Activated CD8-positive, alpha-beta memory T cell treated with anti-CD3 and anti-CD28 coated beads, Interleukin-2, amount 10 ng/mL, durations not matched to agents 7 days and 5 days (primary cell): ENCODE measurements at regions of chr17 and their contacts with region 1.

Region 1: DNA sequence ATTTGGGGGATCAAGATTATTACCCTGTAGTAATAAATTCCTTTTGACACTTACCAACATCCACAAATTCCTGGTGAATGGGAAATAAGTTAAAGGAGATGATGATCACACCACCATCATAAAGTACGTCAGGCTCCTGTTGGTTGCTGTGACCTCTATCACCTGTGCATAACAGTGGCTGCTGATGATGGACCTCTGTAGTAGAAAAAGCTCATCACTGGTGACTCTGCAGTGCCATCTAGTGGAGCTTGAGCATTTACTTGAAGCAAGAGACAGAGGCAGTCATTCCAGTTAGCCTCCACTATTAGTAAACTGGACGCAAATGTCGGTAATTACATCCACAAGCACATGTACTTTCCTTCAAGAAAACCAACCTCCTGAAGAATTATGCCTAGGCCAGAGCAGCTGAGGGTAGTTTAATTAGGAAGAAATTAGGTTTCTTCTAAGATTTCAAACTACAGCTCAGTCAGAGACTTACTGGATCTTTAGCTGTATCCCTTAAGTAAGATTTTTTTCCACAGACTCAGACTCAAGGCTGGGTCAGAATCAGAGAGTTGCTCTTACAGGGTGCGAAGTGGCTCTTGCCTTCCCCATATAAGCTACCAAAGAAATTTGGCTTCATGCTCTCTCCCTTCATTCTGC is 39.3 kb downstream of the CYB561 start:
- DNase-seq: peak; percentile 84
- ATAC-seq: peak; percentile 89
- H3K4me3 Mint-ChIP-seq: no peak overlapping the region
- H3K27ac Mint-ChIP-seq: no peak overlapping the region
- H3K4me1 Mint-ChIP-seq: peaks cover 5% of the 10 kb centered on the region
- H3K27me3 Mint-ChIP-seq: no peaks in the 10 kb centered on the region

Region 2: GRCh38 chr17:62995377-62995885 is 411.4 kb before region 1 on chr17:
- CTCF ChIA-PET with region 1: interaction called, 35 read pairs
- DNase-seq: peak; percentile 53
- ATAC-seq: peak; percentile 64
- H3K4me3 Mint-ChIP-seq: no peak overlapping the region
- H3K27ac Mint-ChIP-seq: no peak overlapping the region
- H3K4me1 Mint-ChIP-seq: peaks cover 9% of the 10 kb centered on the region
- H3K27me3 Mint-ChIP-seq: no peaks in the 10 kb centered on the region

Region 3: DNA sequence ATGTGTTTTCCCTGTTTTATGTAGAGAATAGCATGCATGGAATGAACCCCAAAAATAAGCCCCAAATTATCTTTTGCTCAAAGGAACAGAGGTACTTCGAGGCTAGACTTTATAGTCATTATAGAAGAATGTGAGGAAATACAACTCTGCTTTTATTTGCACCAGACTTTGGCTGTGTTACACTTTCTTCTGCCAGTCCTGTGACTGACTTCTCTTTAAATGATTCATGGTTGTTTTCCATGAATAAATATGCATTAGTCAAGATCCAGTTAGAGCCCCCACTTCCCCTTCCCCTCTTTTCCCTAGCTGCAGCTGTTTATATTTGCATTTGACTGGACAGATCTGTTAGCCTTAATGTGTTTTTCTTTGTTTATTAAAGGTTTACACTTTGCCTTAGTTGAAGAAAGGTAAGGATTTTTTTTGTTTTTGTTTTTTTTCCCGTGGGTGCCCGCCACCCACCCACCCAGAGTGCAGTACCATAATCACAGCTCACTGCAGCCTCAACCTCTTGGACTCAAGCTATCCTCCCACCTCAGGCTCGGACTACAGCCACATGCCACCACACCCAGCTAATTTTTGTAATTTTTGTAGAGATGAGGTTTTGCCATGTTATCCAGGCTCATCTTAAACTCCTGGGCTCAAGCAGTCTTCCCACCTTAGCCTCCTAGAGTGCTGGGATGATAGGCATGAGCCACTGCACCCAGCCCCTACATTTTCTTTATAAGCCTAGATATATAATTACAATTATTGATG is 113.3 kb before region 1 on chr17:
- CTCF ChIA-PET with region 1: no interaction called
- DNase-seq: no peak
- ATAC-seq: no peak
- H3K4me3 Mint-ChIP-seq: no peak overlapping the region
- H3K27ac Mint-ChIP-seq: no peak overlapping the region
- H3K4me1 Mint-ChIP-seq: peaks cover 4% of the 10 kb centered on the region
- H3K27me3 Mint-ChIP-seq: no peaks in the 10 kb centered on the region

Region 4: DNA sequence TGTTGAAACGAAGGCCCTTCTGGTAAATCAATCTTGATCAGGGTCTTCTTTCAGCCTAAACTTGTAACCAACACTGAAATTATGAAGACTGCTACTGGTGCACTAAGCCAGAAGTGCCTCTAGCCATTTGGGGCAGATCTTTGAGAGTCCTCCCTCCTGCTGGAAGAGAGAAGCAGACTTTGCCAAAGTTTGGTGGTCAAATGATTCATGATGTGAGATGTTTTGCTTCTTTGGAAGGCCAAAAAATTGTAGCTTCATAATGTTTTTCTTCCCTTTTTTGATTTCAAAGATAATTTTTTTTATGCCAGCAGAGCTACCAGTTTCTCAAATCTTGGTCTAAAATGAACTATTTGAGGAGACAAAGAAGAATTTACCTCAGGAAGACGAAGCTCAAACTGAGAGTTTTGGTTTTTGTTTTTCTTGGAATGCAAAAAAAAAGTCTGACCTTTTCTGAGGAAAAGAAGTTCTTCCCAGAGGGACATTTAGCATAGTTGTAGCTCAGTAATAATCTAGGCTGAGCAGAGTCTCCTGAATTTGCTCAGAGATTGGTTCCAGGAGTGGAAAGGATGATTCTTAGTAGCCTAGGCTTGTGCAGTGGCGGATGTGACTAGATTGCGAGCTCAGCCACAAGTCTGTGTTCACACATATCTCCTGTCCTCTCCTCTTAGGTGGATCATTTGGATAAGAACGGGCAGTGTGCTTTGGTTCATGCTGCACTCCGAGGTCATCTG is 11.6 kb before region 1 on chr17:
- CTCF ChIA-PET with region 1: interaction called, 11 read pairs
- DNase-seq: no peak
- ATAC-seq: no peak
- H3K4me3 Mint-ChIP-seq: no peak overlapping the region
- H3K27ac Mint-ChIP-seq: no peak overlapping the region
- H3K4me1 Mint-ChIP-seq: peaks cover 15% of the 10 kb centered on the region
- H3K27me3 Mint-ChIP-seq: no peaks in the 10 kb centered on the region

Region 5: DNA sequence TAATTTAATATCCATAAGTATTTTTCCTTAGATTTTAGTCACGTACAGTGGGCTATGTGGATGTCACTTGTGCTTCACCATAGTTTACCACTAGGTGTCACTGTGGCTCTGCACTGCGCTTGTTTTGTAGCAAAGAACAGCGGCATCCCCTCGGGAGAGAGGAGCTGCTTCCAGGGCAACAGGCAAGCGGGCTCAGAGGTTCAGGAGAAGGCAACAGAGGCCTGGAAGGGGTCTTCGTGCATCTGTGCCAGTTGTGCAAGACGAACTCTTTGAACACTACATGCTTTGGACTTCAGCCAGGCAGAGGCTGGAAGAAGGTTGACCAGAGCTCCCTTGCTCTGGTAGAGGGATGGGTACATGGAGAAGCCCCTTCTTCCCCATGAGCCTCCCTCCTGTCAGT is 18.7 kb after region 1 on chr17:
- CTCF ChIA-PET with region 1: interaction called, 45 read pairs
- DNase-seq: peak; percentile 83
- ATAC-seq: peak; percentile 75
- H3K4me3 Mint-ChIP-seq: no peak overlapping the region
- H3K27ac Mint-ChIP-seq: no peak overlapping the region
- H3K4me1 Mint-ChIP-seq: peaks cover 52% of the 10 kb centered on the region
- H3K27me3 Mint-ChIP-seq: no peaks in the 10 kb centered on the region

Region 6: GRCh38 chr17:63455417-63455816 is 48.6 kb after region 1 on chr17:
- CTCF ChIA-PET with region 1: no interaction called
- DNase-seq: no peak
- ATAC-seq: no peak
- H3K4me3 Mint-ChIP-seq: no peak overlapping the region
- H3K27ac Mint-ChIP-seq: no peak overlapping the region
- H3K4me1 Mint-ChIP-seq: peaks cover 4% of the 10 kb centered on the region
- H3K27me3 Mint-ChIP-seq: no peaks in the 10 kb centered on the region

Region 7: GRCh38 chr17:63478791-63479494 is 72.1 kb after region 1 on chr17:
- CTCF ChIA-PET with region 1: interaction called, 20 read pairs
- DNase-seq: peak; percentile 89
- ATAC-seq: peak; percentile 90
- H3K4me3 Mint-ChIP-seq: no peak overlapping the region
- H3K27ac Mint-ChIP-seq: no peak overlapping the region
- H3K4me1 Mint-ChIP-seq: peaks cover 10% of the 10 kb centered on the region
- H3K27me3 Mint-ChIP-seq: peaks cover 39% of the 10 kb centered on the region

Region 8: GRCh38 chr17:63497708-63498483 is 91.1 kb after region 1 on chr17:
- CTCF ChIA-PET with region 1: no interaction called
- DNase-seq: no peak
- ATAC-seq: no peak
- H3K4me3 Mint-ChIP-seq: no peak overlapping the region
- H3K27ac Mint-ChIP-seq: no peak overlapping the region
- H3K4me1 Mint-ChIP-seq: no peaks in the 10 kb centered on the region
- H3K27me3 Mint-ChIP-seq: peaks cover 17% of the 10 kb centered on the region